ENCODE measurements at regions of chr10 and their contacts with region 1.

Region 1: DNA sequence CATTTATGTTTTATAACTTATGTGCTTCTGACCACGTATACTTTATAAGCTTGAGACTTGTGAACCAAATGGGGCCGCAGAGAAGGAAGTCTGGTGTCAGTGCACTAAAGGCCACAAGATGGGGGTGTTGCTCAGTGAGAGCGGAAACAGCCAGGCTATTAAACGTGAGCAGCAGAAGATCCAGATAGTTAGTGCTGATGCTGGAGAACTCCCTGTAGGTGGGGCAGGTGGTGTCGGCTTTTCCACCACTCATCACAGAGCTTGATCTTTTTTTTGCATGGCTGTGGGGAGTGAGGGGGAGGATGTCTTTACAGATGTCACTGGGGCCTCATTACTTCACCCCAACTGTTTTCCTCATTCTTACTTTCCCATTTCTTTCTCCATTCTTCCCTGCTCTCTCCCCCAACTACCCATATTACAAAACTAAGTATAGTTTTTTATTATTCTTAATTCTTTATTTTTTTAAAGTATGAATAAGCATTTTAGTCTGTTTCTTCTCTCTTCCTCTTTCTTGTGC is 34.7 kb downstream of the ACADSB start:
- DNase-seq: peak; percentile 76
- H3K4me3 ChIP-seq: no peak overlapping the region
- H3K27ac ChIP-seq: no peak overlapping the region
- H3K4me1 ChIP-seq: no peaks in the 10 kb centered on the region
- CTCF ChIP-seq: peak; percentile 92

Region 2: DNA sequence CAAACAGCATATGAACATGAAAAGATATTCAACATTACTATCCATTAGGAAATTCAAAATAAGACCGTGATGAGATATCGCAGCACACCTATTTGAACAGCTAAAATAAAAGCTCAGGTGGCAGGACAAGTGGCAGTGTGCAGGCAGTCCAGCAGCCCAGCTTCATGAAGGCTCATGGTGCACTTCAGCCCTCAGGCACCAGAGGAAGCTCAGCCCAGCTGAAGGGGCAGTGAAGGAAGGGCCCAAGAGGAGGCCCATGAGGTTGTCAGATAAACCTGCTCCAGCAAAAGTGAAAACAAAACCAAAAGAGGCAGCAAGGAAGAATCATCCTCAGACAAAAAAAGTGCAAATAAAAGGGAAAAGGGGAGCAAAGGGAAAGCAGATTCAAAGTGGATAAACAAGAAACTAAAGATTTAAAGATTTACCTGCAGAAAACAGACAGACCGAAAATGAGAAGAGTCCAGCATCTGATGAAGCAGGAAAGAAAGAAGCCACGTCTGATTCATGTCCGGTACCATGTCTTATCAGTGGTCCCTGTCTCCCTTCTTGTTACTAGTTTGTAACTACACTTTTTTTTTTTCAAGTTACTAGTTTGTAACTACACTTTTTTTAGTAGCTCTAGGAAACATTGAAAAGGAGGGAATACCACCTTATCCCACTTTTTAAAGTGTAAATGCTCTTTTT is 149.1 kb before region 1 on chr10:
- CTCF ChIA-PET with region 1: no interaction called
- POLR2A ChIA-PET with region 1: no interaction called
- intact Hi-C with region 1: no loop called
- DNase-seq: no peak
- H3K4me3 ChIP-seq: no peak overlapping the region
- H3K27ac ChIP-seq: no peak overlapping the region
- H3K4me1 ChIP-seq: no peaks in the 10 kb centered on the region
- CTCF ChIP-seq: no peak

Region 3: DNA sequence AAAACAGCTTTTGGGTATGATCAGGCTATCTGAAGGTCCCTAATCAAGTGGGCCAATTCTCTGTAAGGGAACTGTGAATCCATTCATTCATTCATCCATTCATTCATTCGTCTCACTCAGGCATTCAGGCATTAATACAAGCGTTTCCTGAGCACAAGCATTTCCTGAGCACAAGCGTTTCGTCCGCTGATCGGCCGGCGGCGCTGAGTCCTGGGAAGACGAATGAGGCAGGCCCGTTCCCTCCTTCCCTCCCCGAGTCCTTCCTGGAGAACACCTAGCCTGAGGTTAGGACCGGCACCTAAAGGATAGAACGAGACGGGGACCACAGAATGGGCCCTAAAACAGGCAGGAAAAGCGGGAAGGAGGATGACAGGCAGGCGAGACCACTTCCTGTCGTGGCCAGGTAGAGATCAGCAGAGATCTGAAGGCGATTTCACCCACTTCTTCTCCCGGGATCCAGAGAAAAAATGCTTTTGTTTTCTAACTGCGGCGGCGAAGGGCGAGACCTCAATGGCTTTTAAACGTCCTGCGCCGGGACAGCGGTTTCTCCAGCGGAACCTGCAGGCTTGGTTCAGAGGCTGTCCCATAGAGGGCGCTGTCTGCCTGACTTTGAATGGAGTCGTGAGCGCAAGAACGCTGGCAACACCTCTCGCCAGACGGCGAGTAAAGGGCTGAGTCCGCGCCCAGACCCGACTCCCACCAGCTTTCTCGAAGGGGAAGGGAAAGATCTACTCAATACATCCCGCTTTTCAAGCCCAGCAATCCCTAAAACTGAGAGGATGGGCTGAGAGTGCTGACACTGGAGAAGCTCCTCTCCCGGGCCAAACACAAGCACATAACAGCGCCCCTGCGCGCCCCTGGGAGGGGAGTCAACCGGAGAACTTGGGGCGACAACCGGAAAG is 89.4 kb after region 1 on chr10:
- CTCF ChIA-PET with region 1: no interaction called
- POLR2A ChIA-PET with region 1: no interaction called
- intact Hi-C with region 1: loop called (anchors 5 kb)
- DNase-seq: peak; percentile 45
- H3K4me3 ChIP-seq: no peak overlapping the region
- H3K27ac ChIP-seq: no peak overlapping the region
- H3K4me1 ChIP-seq: no peaks in the 10 kb centered on the region
- CTCF ChIP-seq: peak; percentile 84

Region 4: DNA sequence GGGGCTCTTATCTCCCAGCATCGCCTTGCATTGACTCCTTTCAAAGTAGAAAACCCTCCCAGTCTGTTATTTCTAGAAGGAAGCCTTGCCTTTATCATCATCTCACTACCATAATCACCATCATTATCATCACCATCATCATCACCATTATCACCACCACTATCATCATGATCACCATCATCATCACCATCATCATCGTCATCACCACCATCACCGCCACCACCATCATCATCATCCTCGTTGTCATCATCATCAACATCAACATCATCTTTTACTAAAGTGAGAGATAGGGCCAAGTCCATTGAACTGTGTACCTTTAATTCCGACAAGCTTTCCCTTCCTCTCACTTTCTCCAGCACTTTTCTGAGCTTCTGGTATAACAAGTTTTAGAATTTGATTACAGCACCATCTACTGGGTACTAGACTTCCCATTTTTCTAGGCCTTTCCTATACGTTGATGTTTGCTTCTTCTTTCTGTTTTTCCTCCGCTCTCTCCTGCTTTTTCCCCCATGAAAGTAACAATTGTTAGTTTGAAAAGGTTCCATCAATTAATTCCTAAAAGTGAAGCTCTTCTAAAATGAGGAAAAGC is 337.1 kb after region 1 on chr10:
- CTCF ChIA-PET with region 1: no interaction called
- POLR2A ChIA-PET with region 1: no interaction called
- intact Hi-C with region 1: loop called (anchors 10 kb)
- DNase-seq: no peak
- H3K4me3 ChIP-seq: no peak overlapping the region
- H3K27ac ChIP-seq: no peak overlapping the region
- H3K4me1 ChIP-seq: no peaks in the 10 kb centered on the region
- CTCF ChIP-seq: peak; percentile 52

Region 5: DNA sequence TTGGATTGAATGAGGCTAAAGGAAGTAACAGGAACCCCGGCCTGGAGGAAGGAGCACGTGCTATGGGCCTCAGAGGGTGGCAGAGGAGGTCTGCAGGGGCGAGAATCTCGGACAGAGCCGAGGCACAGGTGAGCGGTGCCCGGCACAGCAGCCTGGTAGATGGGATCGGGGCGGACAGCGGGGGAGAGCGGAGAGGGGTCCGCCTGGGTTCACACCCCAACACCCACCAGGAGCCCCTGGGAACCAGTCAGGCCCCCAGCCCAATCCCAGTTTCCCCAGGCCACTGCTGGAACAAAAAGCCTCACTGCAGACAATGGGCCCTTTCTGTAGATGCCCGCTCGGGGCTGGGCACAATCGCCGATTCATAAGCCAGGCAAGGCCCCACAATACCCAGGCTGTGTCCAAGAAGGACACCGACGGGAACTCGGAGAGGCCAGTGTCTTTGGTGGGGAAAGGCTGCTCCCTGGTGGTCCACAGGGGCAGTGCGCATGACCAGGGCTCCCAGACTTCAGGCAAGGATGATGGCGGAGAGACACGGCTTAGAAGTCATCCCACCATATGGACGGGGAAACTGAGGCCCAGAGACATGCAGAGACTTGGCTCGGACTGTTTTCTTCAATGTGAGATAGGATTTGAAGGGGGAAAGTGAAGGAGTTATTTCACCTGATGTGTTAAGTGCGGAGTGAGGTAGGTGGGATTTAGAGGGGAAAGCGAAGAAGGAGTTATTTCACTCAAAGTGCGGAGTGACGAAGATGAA is 515.8 kb after region 1 on chr10:
- CTCF ChIA-PET with region 1: no interaction called
- POLR2A ChIA-PET with region 1: no interaction called
- intact Hi-C with region 1: loop called (anchors 1 kb)
- DNase-seq: peak; percentile 57
- H3K4me3 ChIP-seq: no peak overlapping the region
- H3K27ac ChIP-seq: no peak overlapping the region
- H3K4me1 ChIP-seq: no peaks in the 10 kb centered on the region
- CTCF ChIP-seq: peak; percentile 98

Region 6: GRCh38 chr10:123967396-123968243 is 924.2 kb after region 1 on chr10:
- CTCF ChIA-PET with region 1: no interaction called
- POLR2A ChIA-PET with region 1: no interaction called
- intact Hi-C with region 1: loop called (anchors 10 kb)
- DNase-seq: peak; percentile 50
- H3K4me3 ChIP-seq: no peak overlapping the region
- H3K27ac ChIP-seq: no peak overlapping the region
- H3K4me1 ChIP-seq: no peaks in the 10 kb centered on the region
- CTCF ChIP-seq: peak; percentile 96

Measured in OCI-LY7 (cell line).